ENCODE measurements at regions of chr14 and their contacts with region 1.

Region 1: DNA sequence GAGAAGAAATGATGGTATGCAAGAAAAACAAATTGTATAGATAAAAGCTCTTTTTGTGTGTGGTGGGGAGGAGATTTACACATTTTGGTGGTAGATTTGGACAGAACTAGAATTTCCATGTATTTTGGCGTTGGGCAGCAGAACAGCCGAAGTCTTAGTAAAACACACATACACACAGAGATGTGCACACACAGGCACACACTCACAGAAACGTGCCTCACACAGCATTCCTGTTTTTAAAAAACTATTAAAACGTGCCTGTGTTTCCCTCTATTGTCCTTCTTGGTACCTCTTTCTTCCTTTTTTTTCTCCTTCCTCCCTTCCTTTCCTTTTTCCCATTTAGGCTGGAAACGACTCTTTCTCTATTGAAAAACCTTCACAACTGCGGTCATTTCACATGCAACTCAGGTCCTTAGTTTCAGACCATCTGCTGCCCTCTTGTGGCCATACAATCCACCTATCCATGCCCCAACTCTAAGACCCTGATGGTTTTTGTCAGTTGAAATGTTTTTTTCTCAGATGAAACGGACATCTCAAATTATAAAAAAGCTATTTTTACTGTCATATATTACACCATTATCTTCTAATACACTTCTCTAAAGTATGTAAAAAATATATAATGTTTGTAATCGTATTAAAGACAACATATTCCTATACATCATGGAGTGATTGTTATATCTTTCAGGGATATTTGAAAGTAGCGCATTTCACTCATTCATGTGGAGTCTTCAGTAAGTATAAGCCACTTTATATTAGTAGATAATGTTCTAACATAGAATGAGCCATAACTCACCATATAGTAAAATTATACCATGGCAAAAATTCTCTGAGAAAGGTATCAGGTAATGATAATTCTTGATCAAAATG is 386.7 kb upstream of the NOVA1 start:
- DNase-seq: peak; percentile 77
- H3K4me3 ChIP-seq: no peak overlapping the region
- H3K27ac ChIP-seq: no peak overlapping the region
- H3K4me1 ChIP-seq: no peaks in the 10 kb centered on the region
- H3K27me3 ChIP-seq: no peaks in the 10 kb centered on the region
- CTCF ChIP-seq: peak; percentile 46 to 72 (median 57)
- EP300 ChIP-seq: no peak
- POLR2A ChIP-seq: no peak

Region 2: GRCh38 chr14:25833341-25834126 is 1151.0 kb before region 1 on chr14:
- intact Hi-C with region 1: loop called (anchors 5 kb)
- DNase-seq: no peak
- H3K4me3 ChIP-seq: no peak overlapping the region
- H3K27ac ChIP-seq: no peak overlapping the region
- H3K4me1 ChIP-seq: peaks cover 0 to 7% (median 0%) of the 10 kb centered on the region in 4 donors
- H3K27me3 ChIP-seq: no peaks in the 10 kb centered on the region
- CTCF ChIP-seq: peak in 3 of 4 experiments; percentile 19 to 58 (median 27)
- EP300 ChIP-seq: no peak
- POLR2A ChIP-seq: no peak

Region 3: DNA sequence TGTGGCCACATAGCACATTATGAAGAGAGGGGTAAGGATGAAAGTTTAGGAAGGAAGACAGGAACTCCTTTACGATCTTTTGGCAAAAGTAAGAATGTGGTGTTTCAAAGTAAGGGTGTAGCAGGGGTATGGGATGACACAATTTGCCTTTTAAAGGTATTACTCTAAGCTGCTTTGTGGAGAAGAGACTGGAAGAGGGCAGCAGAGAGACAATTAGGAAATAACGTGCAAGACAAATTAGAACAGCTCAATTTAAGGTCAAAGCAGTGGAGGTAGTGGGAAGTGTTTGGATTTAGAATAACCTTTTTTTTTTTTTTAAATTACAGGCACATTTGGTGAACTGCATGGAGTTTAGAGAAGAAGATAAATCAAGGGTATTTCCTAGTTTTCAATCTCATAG is 729.3 kb before region 1 on chr14:
- intact Hi-C with region 1: loop called (anchors 10 kb)
- DNase-seq: no peak
- H3K4me3 ChIP-seq: no peak overlapping the region
- H3K27ac ChIP-seq: no peak overlapping the region
- H3K4me1 ChIP-seq: no peaks in the 10 kb centered on the region
- H3K27me3 ChIP-seq: no peaks in the 10 kb centered on the region
- CTCF ChIP-seq: peak; percentile 10 to 41 (median 26)
- EP300 ChIP-seq: no peak
- POLR2A ChIP-seq: no peak

Region 4: GRCh38 chr14:27069640-27070039 is 85.1 kb after region 1 on chr14:
- intact Hi-C with region 1: no loop called
- DNase-seq: no peak
- H3K4me3 ChIP-seq: no peak overlapping the region
- H3K27ac ChIP-seq: no peak overlapping the region
- H3K4me1 ChIP-seq: no peaks in the 10 kb centered on the region
- H3K27me3 ChIP-seq: no peaks in the 10 kb centered on the region
- CTCF ChIP-seq: no peak
- EP300 ChIP-seq: no peak
- POLR2A ChIP-seq: no peak